K562 (cell line): ENCODE measurements at regions of chr4 and their contacts with region 1.

Region 1: GRCh38 chr4:1721004-1721665 is at the starts of genes TACC3 and TMEM129:
- DNase-seq: peak; percentile 96 to 99 (median 96)
- ATAC-seq: peak; percentile 87
- H3K4me3 ChIP-seq: peak within 1 kb of the TSS; percentile 98
- H3K27ac ChIP-seq: peak within 1 kb of the TSS; percentile 97
- H3K4me1 ChIP-seq: peaks cover 10 to 69% of the 10 kb centered on the region in 2 experiments; a peak in 4 of 5 replicates
- H3K27me3 ChIP-seq: no peaks in the 10 kb centered on the region
- CTCF ChIP-seq: no peak
- EP300 ChIP-seq: no peak
- POLR2A ChIP-seq: peak; percentile 64
- RAD21 ChIP-seq: no peak
- polyA plus RNA-seq, gene TACC3: 1.9 to 2.8 TPM
- polyA plus RNA-seq, gene TMEM129: 0.34 to 0.53 TPM

Region 2: GRCh38 chr4:1233641-1234308 is 487.4 kb before region 1 on chr4:
- CTCF ChIA-PET with region 1: no interaction called
- POLR2A ChIA-PET with region 1: no interaction called
- in situ Hi-C with region 1: no loop called
- intact Hi-C with region 1: no loop called
- DNase-seq: no peak
- ATAC-seq: peak; percentile 29; the same call in 2 of the 3 replicates
- H3K4me3 ChIP-seq: no peak overlapping the region
- H3K27ac ChIP-seq: no peak overlapping the region
- H3K4me1 ChIP-seq: peaks cover 0 to 8% of the 10 kb centered on the region in 2 experiments; a peak in 1 of 5 replicates
- H3K27me3 ChIP-seq: no peaks in the 10 kb centered on the region
- CTCF ChIP-seq: 0 out of 6 replicates have a peak, but pooled peaks of 1 of the 3 experiments have one; percentile 4
- EP300 ChIP-seq: no peak
- POLR2A ChIP-seq: no peak
- RAD21 ChIP-seq: no peak

Region 3: GRCh38 chr4:1706358-1706757 is 14.8 kb before region 1 on chr4:
- CTCF ChIA-PET with region 1: no interaction called
- POLR2A ChIA-PET with region 1: interaction called, 15 read pairs
- in situ Hi-C with region 1: no loop called
- intact Hi-C with region 1: no loop called
- DNase-seq: no peak
- ATAC-seq: no peak
- H3K4me3 ChIP-seq: no peak overlapping the region
- H3K27ac ChIP-seq: no peak overlapping the region
- H3K4me1 ChIP-seq: peaks cover 16 to 22% of the 10 kb centered on the region in 2 experiments; a peak in 4 of 5 replicates
- H3K27me3 ChIP-seq: no peaks in the 10 kb centered on the region
- CTCF ChIP-seq: no peak
- EP300 ChIP-seq: no peak
- POLR2A ChIP-seq: no peak
- RAD21 ChIP-seq: no peak

Region 4: GRCh38 chr4:2290974-2291704 is 570.0 kb after region 1 on chr4:
- CTCF ChIA-PET with region 1: no interaction called
- POLR2A ChIA-PET with region 1: no interaction called
- in situ Hi-C with region 1: no loop called
- intact Hi-C with region 1: no loop called
- DNase-seq: no peak
- ATAC-seq: no peak
- H3K4me3 ChIP-seq: no peak overlapping the region
- H3K27ac ChIP-seq: no peak overlapping the region
- H3K4me1 ChIP-seq: peaks cover 0 to 41% of the 10 kb centered on the region in 2 experiments; a peak in 2 of 5 replicates
- H3K27me3 ChIP-seq: no peaks in the 10 kb centered on the region
- CTCF ChIP-seq: no peak
- EP300 ChIP-seq: no peak
- POLR2A ChIP-seq: no peak
- RAD21 ChIP-seq: no peak